ENCODE measurements at regions of chr10 and their contacts with region 1.

Region 1: GRCh38 chr10:61164458-61165160 is 220.6 kb upstream of the RHOBTB1 start:
- DNase-seq: no peak
- ATAC-seq: peak; percentile 31 to 74

Region 2: DNA sequence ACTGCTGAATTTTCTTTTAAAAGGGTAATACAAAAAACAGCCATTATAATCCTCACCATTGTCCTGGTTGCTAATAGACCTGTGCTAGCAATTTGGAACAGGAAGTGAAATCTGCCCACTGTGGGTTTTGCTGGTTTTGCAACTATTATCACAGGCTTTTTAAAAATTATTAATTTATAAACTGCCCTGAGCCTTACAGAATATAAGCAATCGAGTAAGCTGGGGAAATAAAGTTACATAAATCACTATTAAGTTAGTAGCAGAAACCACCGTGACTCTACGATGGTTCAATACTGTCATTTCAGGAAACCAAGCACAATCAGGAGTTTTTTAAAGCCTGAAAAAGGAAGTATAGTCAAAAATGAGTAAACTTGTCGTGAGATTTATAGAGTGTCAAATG is 226.2 kb after region 1 on chr10:
- intact Hi-C with region 1: no loop called
- DNase-seq: no peak
- ATAC-seq: no peak

Region 3: DNA sequence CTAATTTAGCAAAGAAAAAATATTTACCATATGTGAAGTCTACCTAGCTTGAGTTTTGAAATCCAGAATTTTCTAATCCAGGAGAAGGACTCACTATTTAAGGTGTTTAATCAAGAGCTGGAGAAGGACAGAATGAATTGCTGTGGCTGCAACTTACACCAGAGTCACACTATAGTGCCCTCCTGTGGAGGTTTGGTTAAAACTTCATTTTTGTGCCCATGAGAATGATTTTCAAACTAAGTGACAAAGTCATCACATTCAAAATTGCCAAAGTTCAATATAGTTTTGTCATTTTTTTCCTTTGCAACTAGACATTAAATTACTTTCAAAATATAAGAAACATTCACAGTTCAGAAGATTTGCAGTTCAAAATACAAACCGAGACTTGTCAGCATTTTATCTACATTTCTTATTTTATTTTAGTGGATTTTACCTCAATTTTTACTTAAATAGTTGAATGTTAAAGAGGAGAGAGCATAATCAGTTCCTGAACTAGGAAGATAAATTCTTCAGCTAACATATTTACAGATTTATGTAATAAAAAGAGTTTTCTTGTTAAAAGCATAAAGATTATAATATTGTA is 568.8 kb after region 1 on chr10:
- intact Hi-C with region 1: loop called in 1 of 2 experiments (anchors 10 kb)
- DNase-seq: no peak
- ATAC-seq: no peak

Measured in left cardiac atrium (tissue), 4 donors.